ENCODE measurements at regions of chr4 and their contacts with region 1.

Region 1: GRCh38 chr4:64756016-64756415 is 346.8 kb upstream of the TECRL start:
- DNase-seq: no peak
- H3K4me3 ChIP-seq: no peak overlapping the region
- H3K27ac ChIP-seq: no peak overlapping the region
- H3K4me1 ChIP-seq: no peaks in the 10 kb centered on the region
- H3K27me3 ChIP-seq: no peaks in the 10 kb centered on the region
- CTCF ChIP-seq: no peak
- EP300 ChIP-seq: no peak
- POLR2A ChIP-seq: no peak

Region 2: GRCh38 chr4:65968831-65969558 is 1213.0 kb after region 1 on chr4:
- intact Hi-C with region 1: loop called in 1 of 4 experiments (anchors 5 kb)
- DNase-seq: no peak
- H3K4me3 ChIP-seq: no peak overlapping the region
- H3K27ac ChIP-seq: no peak overlapping the region
- H3K4me1 ChIP-seq: peaks cover 1% of the 10 kb centered on the region
- H3K27me3 ChIP-seq: no peaks in the 10 kb centered on the region
- CTCF ChIP-seq: no peak
- EP300 ChIP-seq: no peak
- POLR2A ChIP-seq: no peak